CD4-positive, alpha-beta T cell (primary cell): ENCODE measurements at regions of chr16 and their contacts with region 1.

Region 1: GRCh38 chr16:67579686-67580085 is 17.4 kb downstream of the CTCF start:
- DNase-seq: no peak
- ATAC-seq: no peak
- H3K4me3 ChIP-seq: no peak overlapping the region
- H3K4me3 Mint-ChIP-seq: no peak overlapping the region
- H3K27ac ChIP-seq: no peak overlapping the region
- H3K27ac Mint-ChIP-seq: no peak overlapping the region
- H3K4me1 ChIP-seq: peaks cover 8% of the 10 kb centered on the region
- H3K4me1 Mint-ChIP-seq: peaks cover 20% of the 10 kb centered on the region
- H3K27me3 ChIP-seq: no peaks in the 10 kb centered on the region
- H3K27me3 Mint-ChIP-seq: no peaks in the 10 kb centered on the region
- CTCF ChIP-seq: no peak

Region 2: GRCh38 chr16:67595033-67595355 is 15.3 kb after region 1 on chr16:
- CTCF ChIA-PET with region 1: no interaction called
- POLR2A ChIA-PET with region 1: interaction called, 3 read pairs
- intact Hi-C with region 1: loop called in 1 of 2 experiments (anchors 2 kb)
- DNase-seq: peak in 1 of 14 experiments; percentile 12
- ATAC-seq: peak; percentile 44
- H3K4me3 ChIP-seq: no peak overlapping the region
- H3K4me3 Mint-ChIP-seq: no peak overlapping the region
- H3K27ac ChIP-seq: no peak overlapping the region
- H3K27ac Mint-ChIP-seq: peak overlapping the region; percentile 18
- H3K4me1 ChIP-seq: peaks cover 11% of the 10 kb centered on the region
- H3K4me1 Mint-ChIP-seq: peaks cover 58% of the 10 kb centered on the region
- H3K27me3 ChIP-seq: no peaks in the 10 kb centered on the region
- H3K27me3 Mint-ChIP-seq: no peaks in the 10 kb centered on the region
- CTCF ChIP-seq: no peak